WTC11 (cell line): ENCODE measurements at regions of chr19 and their contacts with region 1.

Region 1: DNA sequence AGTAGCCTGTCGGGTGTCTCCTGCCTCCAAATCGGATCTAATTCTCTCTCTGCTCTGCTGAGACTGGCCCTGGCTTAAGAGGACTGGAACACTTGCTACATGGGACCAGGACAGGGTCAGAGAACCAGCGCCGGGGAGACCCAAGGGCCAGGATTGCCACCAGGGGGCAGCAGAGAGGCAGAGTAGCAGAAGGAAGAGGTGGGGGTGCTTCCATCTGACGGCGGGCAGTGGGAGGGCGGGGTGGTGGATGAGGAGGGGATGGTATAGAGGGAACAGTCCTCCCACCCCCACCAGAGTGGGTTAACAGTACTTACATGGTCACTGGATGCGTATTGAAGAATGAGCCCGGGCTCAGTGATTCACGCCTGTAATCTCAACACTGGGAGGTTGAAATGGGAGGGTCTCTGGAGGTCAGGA is 11.9 kb downstream of the SELENOW start:
- DNase-seq: peak; percentile 100
- ATAC-seq: peak; percentile 91
- H3K4me3 Mint-ChIP-seq: peak overlapping the region; percentile 25; the same call in 1 of the 2 replicates
- H3K27ac Mint-ChIP-seq: peak overlapping the region; percentile 57; the same call in 1 of the 2 replicates
- H3K4me1 Mint-ChIP-seq: peaks cover 10% of the 10 kb centered on the region
- H3K27me3 Mint-ChIP-seq: no peaks in the 10 kb centered on the region
- CTCF ChIP-seq: peak; percentile 85

Region 2: GRCh38 chr19:47561440-47562057 is 228.9 kb before region 1 on chr19:
- CTCF ChIA-PET with region 1: no interaction called
- POLR2A ChIA-PET with region 1: no interaction called
- DNase-seq: no peak
- ATAC-seq: no peak; the same call in 1 of the 2 replicates
- H3K4me3 Mint-ChIP-seq: no peak overlapping the region
- H3K27ac Mint-ChIP-seq: no peak overlapping the region; the same call in 1 of the 2 replicates
- H3K4me1 Mint-ChIP-seq: peaks cover 13% of the 10 kb centered on the region
- H3K27me3 Mint-ChIP-seq: no peaks in the 10 kb centered on the region
- CTCF ChIP-seq: no peak

Region 3: DNA sequence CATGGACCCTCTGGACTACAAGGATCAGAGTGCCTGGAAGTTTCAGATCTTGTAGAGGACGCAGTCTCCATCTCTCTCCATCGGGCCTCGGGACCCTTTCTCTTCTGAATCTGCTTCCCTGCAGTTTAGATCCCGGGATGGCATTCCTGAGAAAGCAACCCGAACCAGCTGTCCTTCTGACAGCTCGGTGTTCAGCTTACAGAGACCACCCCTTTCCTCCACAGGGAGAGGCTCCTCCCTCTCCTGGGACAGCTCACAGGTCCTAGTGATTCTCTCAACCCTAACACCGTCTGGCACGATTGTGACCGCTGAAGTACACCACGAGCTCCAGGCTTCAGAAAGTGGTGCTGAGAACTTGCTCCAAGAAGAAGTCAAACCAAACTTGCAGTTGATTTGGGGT is 49.5 kb after region 1 on chr19:
- CTCF ChIA-PET with region 1: interaction called, 11 read pairs
- POLR2A ChIA-PET with region 1: no interaction called
- DNase-seq: peak; percentile 56
- ATAC-seq: peak; percentile 97
- H3K4me3 Mint-ChIP-seq: peak overlapping the region; percentile 33; the same call in 1 of the 2 replicates
- H3K27ac Mint-ChIP-seq: peak overlapping the region; percentile 92
- H3K4me1 Mint-ChIP-seq: peaks cover 26% of the 10 kb centered on the region
- H3K27me3 Mint-ChIP-seq: no peaks in the 10 kb centered on the region; the same call in 1 of the 2 replicates
- CTCF ChIP-seq: no peak